ENCODE measurements at regions of chr4 and their contacts with region 1.

Region 1: DNA sequence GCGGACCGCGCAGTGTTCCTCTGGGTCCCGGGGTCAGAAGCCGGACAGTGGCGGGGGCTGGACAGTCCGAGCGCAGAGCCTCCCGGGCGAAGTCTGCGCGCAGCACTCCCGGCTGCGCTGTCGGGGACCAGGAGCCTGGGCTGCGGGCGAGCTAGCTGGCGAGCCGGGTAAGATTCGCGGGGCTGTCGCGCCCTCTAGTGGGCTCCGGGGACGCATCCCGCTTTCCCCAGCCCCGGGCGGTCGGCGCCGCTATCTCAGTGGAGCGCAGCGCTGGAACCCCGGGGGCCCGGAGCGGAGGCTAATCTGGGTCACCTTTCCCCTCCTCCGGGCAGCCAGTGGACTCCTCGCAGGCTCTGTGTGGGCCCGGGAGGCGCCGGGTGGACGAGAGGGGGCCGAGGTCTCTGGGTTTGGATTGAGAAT is 4.2 kb downstream of the PDGFRA start:
- DNase-seq: peak; percentile 74
- H3K4me3 ChIP-seq: peak overlapping the region; percentile 29 to 30
- H3K27ac ChIP-seq: peak overlapping the region; percentile 36 to 56
- H3K4me1 ChIP-seq: peaks cover 3% of the 10 kb centered on the region
- H3K27me3 ChIP-seq: peaks cover 11% of the 10 kb centered on the region
- CTCF ChIP-seq: peak; percentile 49 to 83 (median 81)
- POLR2A ChIP-seq: no peak

Region 2: DNA sequence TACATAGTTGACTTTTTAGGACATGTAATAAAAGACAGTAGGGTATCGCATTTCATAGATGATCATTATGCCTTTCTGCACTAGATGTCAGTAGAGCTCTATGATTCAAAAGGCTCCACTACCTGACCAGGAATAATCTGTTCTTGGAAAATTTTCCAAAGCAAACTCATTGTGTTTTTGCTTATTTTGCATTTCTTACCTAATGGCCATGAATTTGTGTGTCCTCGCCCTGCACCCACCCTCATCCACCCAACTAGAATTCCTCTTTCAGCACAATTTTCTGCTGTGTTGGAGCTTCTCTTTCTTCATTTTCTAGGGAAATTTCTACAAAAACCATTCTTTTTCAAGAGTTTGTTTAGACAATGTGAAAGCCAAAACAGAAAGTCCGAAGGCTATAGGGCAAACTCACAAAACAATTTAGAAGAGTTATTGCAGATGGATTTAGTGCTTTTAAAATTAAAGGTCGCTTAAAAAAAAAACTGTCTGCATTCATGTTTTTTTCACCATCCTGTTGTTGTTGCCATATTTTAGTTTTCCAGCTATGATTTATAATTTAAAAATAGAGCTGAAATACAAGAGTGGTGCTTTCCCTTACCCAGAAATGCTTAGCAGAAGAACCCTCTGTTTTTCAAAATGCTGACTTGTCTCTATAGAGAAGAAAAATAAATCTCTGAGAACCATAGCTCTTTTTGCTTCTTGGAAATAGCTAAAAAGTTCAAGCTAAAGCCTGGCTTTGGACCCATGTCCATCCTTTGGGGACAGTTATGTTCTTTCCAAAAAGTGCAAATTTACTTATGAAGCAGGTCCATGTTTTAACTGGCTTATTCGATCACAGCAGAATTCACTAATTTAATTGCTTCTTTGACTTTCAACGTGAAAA is 1998.5 kb before region 1 on chr4:
- intact Hi-C with region 1: loop called (anchors 10 kb)
- DNase-seq: no peak
- H3K4me3 ChIP-seq: no peak overlapping the region
- H3K27ac ChIP-seq: no peak overlapping the region
- H3K4me1 ChIP-seq: no peaks in the 10 kb centered on the region
- H3K27me3 ChIP-seq: no peaks in the 10 kb centered on the region
- CTCF ChIP-seq: peak in 3 of 4 experiments; percentile 33 to 65 (median 50)
- POLR2A ChIP-seq: no peak

Region 3: DNA sequence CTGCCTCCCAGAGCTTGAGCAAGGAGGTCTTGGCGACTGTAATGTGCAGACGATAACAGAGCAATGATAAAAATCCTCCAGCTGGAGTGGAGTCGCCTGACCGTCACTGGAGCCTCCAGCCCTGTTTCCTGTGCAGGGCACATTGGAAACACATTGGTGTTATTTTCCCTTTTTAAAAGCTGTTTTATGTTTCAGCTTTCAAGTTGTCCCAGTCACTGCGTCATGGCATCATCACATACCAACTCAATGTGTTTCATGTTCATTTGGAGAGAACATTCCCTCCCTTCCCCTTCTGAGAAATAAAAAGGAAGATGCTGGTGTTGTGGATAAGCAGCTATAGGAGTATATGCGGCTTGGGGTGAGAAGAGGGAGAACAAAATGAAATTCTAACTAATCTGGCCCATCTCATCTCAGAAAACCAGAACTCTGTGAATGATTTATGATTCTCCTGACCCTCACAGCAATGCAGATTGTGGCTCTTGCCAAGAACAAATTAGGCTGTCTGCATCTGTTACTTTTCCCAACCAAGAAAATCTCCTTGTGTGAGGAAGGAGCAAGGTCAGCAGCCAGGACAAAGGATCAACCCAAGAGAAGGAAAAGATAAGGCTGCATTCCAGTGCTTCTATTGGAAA is 1236.9 kb before region 1 on chr4:
- intact Hi-C with region 1: loop called (anchors 5 kb)
- DNase-seq: no peak
- H3K4me3 ChIP-seq: no peak overlapping the region
- H3K27ac ChIP-seq: no peak overlapping the region
- H3K4me1 ChIP-seq: no peaks in the 10 kb centered on the region
- H3K27me3 ChIP-seq: no peaks in the 10 kb centered on the region
- CTCF ChIP-seq: no peak
- POLR2A ChIP-seq: no peak

Region 4: GRCh38 chr4:53196882-53197771 is 1036.2 kb before region 1 on chr4:
- intact Hi-C with region 1: loop called (anchors 2 kb)
- DNase-seq: peak; percentile 13
- H3K4me3 ChIP-seq: no peak overlapping the region
- H3K27ac ChIP-seq: no peak overlapping the region
- H3K4me1 ChIP-seq: no peaks in the 10 kb centered on the region
- H3K27me3 ChIP-seq: no peaks in the 10 kb centered on the region
- CTCF ChIP-seq: peak; percentile 64 to 84 (median 74)
- POLR2A ChIP-seq: no peak

Region 5: GRCh38 chr4:53929955-53930798 is 303.1 kb before region 1 on chr4:
- intact Hi-C with region 1: loop called (anchors 5 kb)
- DNase-seq: peak; percentile 79
- H3K4me3 ChIP-seq: no peak overlapping the region
- H3K27ac ChIP-seq: no peak overlapping the region
- H3K4me1 ChIP-seq: no peaks in the 10 kb centered on the region
- H3K27me3 ChIP-seq: no peaks in the 10 kb centered on the region
- CTCF ChIP-seq: peak in 3 of 4 experiments; percentile 73 to 84 (median 82)
- POLR2A ChIP-seq: no peak

Region 6: DNA sequence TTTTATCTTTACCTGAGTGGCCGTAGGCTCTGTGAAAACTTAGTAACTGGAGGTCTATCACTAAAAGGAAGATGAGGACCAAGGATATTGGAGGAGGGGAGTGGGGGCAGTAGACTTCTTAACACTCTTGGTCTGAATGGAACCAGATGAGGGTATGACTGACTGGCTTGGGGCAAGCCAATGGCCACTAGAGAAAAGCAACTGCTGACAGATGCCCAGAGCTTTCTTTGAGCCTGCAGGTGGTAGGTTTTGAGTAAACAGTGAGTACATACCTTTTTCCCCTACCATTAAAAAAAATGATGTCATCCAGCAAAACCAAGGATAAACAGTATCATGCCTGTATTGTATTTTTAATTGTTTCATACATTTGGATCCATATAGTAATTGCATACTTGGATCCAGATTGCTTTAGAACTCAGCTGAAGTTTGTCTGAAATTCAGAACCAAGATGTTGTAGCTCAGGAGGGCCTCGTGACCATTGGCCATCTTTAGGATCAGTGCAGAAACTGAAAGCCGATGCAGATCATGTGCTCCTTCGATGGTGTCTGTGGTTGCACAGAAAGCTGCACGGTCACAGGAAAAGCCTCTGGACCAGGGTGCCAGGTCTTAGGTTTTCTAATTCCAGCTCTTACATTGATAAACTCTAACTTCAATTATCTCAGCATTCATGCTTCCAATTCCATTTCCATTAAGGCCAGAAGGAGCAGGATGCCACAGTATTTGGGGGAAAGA is 126.8 kb after region 1 on chr4:
- intact Hi-C with region 1: no loop called
- DNase-seq: no peak
- H3K4me3 ChIP-seq: no peak overlapping the region
- H3K27ac ChIP-seq: no peak overlapping the region
- H3K4me1 ChIP-seq: no peaks in the 10 kb centered on the region
- H3K27me3 ChIP-seq: no peaks in the 10 kb centered on the region
- CTCF ChIP-seq: no peak
- POLR2A ChIP-seq: no peak

Measured in prostate gland (tissue), 2 donors.